A549 (cell line): ENCODE measurements at regions of chr1 and their contacts with region 1.

Region 1: DNA sequence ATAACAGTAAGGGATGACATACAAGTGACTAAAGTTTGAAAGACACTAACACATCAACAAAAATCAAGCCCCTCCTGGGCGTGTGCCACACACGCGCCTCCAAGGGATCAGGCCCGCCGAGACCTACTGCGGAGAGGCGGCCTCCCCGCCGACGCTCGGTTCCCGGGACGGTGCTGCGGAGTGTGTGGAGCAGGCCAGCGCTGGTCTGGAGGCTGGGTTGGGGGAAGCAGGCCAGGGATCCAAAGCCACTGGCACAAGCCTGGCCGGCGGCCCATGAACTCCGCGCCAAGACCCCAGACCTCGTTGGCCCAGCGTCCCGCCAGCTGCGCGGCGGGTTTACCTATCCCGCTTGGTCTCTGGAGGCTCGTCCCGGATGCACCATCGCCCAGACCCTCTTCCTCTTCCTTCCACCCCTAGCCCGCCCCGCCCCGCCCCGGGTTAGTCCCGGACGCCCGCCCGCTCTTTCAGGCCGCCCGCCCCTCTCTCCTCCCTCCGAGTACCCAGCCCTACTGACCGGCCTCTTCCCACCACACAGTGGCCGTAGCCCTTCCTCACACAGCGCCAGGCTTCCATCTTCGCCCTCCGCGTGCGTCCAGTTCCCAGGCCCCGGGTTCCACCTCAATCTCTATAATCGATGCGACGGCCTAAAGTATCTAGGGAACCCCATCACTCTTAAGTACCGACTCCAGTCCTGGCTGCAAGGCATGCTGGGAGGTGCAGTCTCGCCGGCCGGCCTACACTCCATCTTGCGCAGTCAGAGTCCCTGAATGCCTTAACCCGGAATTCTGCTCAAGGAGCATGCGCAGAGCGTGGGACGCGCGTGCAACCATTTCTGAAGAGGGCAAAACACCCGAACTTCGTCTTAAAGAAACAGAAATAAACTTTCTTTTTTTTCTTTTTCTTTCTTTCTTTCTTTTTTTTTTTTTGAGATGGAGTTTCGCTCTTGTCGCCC is at the start of gene ANGEL2:
- DNase-seq: peak; percentile 95 to 98
- ATAC-seq: peak; percentile 97 to 98
- H3K4me3 ChIP-seq: peak within 1 kb of the TSS; percentile 60
- H3K27ac ChIP-seq: peak within 1 kb of the TSS; percentile 92 to 94
- H3K4me1 ChIP-seq: peaks cover 11% of the 10 kb centered on the region; the same call in 2 of the 3 replicates
- CTCF ChIP-seq: no peak
- EP300 ChIP-seq: no peak
- POLR2A ChIP-seq: peak; percentile 71
- RAD21 ChIP-seq: no peak
- polyA plus RNA-seq, gene ANGEL2: 38.9 and 42.3 TPM in 2 replicates

Region 2: DNA sequence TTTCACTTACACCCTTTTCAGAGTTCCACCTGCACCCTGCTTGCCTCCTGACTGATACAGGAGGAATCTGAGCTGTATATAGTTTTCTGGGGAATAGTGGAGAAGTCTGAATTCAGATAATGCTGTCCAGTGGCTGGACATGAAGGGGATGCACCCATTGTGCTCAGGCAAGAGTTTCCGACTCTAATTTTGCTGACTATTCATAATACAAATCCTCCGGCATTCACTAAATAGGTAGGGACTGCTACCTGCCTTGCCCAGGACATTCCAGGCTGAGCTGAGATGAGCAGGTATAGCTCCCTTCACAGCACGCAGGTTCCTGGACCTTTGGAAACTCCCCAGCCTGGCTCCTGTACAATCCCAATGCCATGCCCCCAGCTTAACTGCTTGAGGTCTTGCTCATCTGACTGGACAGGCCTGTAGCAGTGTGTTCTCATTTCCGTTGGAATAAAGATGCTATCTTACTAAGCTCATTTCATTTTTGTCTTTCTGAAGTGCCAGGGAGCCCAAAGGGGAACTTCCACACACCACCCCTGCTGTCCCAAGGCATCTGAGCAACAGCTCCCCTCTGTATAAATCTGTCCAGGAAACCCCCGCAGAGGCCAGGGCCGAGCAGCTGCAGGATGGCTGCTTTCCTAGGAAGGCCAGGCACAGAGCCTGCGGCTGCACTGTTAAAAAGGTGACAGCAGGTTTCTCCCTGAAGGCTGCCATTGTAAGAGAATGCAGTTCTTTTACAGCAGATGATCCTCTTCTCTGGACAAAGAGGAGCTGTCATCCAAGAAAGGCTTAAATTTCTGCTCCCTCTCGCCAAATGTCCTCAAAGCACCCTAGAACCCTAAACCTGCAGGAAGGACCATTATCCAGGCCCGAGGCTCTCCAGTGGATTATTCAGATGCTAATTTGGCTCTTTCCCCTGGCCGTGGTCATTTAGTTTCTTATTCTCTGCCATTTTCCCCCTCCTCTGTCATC is 86.8 kb before region 1 on chr1:
- CTCF ChIA-PET with region 1: no interaction called
- POLR2A ChIA-PET with region 1: no interaction called
- DNase-seq: no peak
- ATAC-seq: peak in 1 of 2 experiments; percentile 13; a peak in 1 of 6 replicates
- H3K4me3 ChIP-seq: no peak overlapping the region
- H3K27ac ChIP-seq: peak overlapping the region; percentile 50 to 76
- H3K4me1 ChIP-seq: peaks cover 47% of the 10 kb centered on the region
- CTCF ChIP-seq: no peak
- EP300 ChIP-seq: no peak
- POLR2A ChIP-seq: no peak
- RAD21 ChIP-seq: no peak

Region 3: GRCh38 chr1:212987702-212988322 is 27.6 kb before region 1 on chr1:
- CTCF ChIA-PET with region 1: no interaction called
- POLR2A ChIA-PET with region 1: no interaction called
- DNase-seq: peak in 1 of 2 experiments; percentile 37
- ATAC-seq: peak in 1 of 2 experiments; percentile 70; a peak in 3 of 6 replicates
- H3K4me3 ChIP-seq: no peak overlapping the region
- H3K27ac ChIP-seq: peak overlapping the region; percentile 33 to 40; a peak in 5 of 6 replicates
- H3K4me1 ChIP-seq: peaks cover 31% of the 10 kb centered on the region
- CTCF ChIP-seq: no peak
- EP300 ChIP-seq: no peak
- POLR2A ChIP-seq: no peak
- RAD21 ChIP-seq: no peak

Region 4: GRCh38 chr1:213003256-213003655 is 12.1 kb before region 1 on chr1:
- CTCF ChIA-PET with region 1: interaction called, 10 read pairs
- POLR2A ChIA-PET with region 1: no interaction called
- DNase-seq: no peak
- ATAC-seq: no peak
- H3K4me3 ChIP-seq: no peak overlapping the region
- H3K27ac ChIP-seq: no peak overlapping the region
- H3K4me1 ChIP-seq: no peaks in the 10 kb centered on the region
- CTCF ChIP-seq: no peak
- EP300 ChIP-seq: no peak
- POLR2A ChIP-seq: no peak
- RAD21 ChIP-seq: no peak